Heart right ventricle (tissue), 16 donors: ENCODE measurements at regions of chr2 and their contacts with region 1.

Region 1: GRCh38 chr2:216698895-216699294 is 3.5 kb upstream of the IGFBP5 start:
- DNase-seq: peak in 1 of 2 donors; percentile 47
- ATAC-seq: peak in 7 of 8 donors; percentile 30 to 63 (median 48)
- H3K4me3 ChIP-seq: no peak overlapping the region
- H3K27ac ChIP-seq: peak overlapping the region in 6 of 10 donors; percentile 15 to 67 (median 38)
- H3K4me1 ChIP-seq: peaks cover 10 to 80% (median 48%) of the 10 kb centered on the region in 9 donors
- H3K27me3 ChIP-seq: peaks cover 0 to 71% (median 0%) of the 10 kb centered on the region in 7 donors
- CTCF ChIP-seq: peak; percentile 43 to 83 (median 67)

Region 2: GRCh38 chr2:216842636-216843035 is 143.7 kb after region 1 on chr2:
- intact Hi-C with region 1: loop called in 1 of 10 experiments (anchors 5 kb)
- DNase-seq: peak; percentile 53
- ATAC-seq: peak; percentile 30 to 79 (median 66)
- H3K4me3 ChIP-seq: no peak overlapping the region
- H3K27ac ChIP-seq: peak overlapping the region in 1 of 10 donors; percentile 11
- H3K4me1 ChIP-seq: peaks cover 0 to 42% (median 14%) of the 10 kb centered on the region in 9 donors
- H3K27me3 ChIP-seq: no peaks in the 10 kb centered on the region
- CTCF ChIP-seq: no peak

Region 3: GRCh38 chr2:216989340-216990129 is 290.6 kb after region 1 on chr2:
- intact Hi-C with region 1: loop called in 7 of 10 experiments (anchors 5 to 10 kb)
- DNase-seq: no peak
- ATAC-seq: peak in 3 of 8 donors; percentile 23 to 53 (median 26)
- H3K4me3 ChIP-seq: no peak overlapping the region
- H3K27ac ChIP-seq: no peak overlapping the region
- H3K4me1 ChIP-seq: peaks cover 0 to 37% (median 8%) of the 10 kb centered on the region in 9 donors
- H3K27me3 ChIP-seq: no peaks in the 10 kb centered on the region
- CTCF ChIP-seq: peak in 4 of 9 donors; percentile 9 to 27 (median 25)

Region 4: GRCh38 chr2:217027414-217027813 is 328.5 kb after region 1 on chr2:
- intact Hi-C with region 1: no loop called
- DNase-seq: no peak
- ATAC-seq: no peak
- H3K4me3 ChIP-seq: no peak overlapping the region
- H3K27ac ChIP-seq: no peak overlapping the region
- H3K4me1 ChIP-seq: no peaks in the 10 kb centered on the region
- H3K27me3 ChIP-seq: no peaks in the 10 kb centered on the region
- CTCF ChIP-seq: no peak

Region 5: GRCh38 chr2:217064234-217065024 is 365.5 kb after region 1 on chr2:
- intact Hi-C with region 1: loop called in 4 of 10 experiments (anchors 5 to 10 kb)
- DNase-seq: peak in 1 of 2 donors; percentile 45
- ATAC-seq: peak; percentile 60 to 95 (median 83)
- H3K4me3 ChIP-seq: peak overlapping the region in 4 of 10 donors; percentile 18 to 25 (median 22)
- H3K27ac ChIP-seq: peak overlapping the region in 9 of 10 donors; percentile 10 to 74 (median 61)
- H3K4me1 ChIP-seq: peaks cover 0 to 20% (median 11%) of the 10 kb centered on the region in 9 donors
- H3K27me3 ChIP-seq: no peaks in the 10 kb centered on the region
- CTCF ChIP-seq: no peak

Region 6: GRCh38 chr2:217166241-217166850 is 467.5 kb after region 1 on chr2:
- intact Hi-C with region 1: loop called in 9 of 10 experiments (anchors 2 to 5 kb)
- DNase-seq: peak in 1 of 2 donors; percentile 41
- ATAC-seq: peak; percentile 43 to 83 (median 69)
- H3K4me3 ChIP-seq: no peak overlapping the region
- H3K27ac ChIP-seq: no peak overlapping the region
- H3K4me1 ChIP-seq: peaks cover 0 to 23% (median 5%) of the 10 kb centered on the region in 9 donors
- H3K27me3 ChIP-seq: peaks cover 0 to 74% (median 0%) of the 10 kb centered on the region in 7 donors
- CTCF ChIP-seq: peak; percentile 42 to 78 (median 64)

Region 7: DNA sequence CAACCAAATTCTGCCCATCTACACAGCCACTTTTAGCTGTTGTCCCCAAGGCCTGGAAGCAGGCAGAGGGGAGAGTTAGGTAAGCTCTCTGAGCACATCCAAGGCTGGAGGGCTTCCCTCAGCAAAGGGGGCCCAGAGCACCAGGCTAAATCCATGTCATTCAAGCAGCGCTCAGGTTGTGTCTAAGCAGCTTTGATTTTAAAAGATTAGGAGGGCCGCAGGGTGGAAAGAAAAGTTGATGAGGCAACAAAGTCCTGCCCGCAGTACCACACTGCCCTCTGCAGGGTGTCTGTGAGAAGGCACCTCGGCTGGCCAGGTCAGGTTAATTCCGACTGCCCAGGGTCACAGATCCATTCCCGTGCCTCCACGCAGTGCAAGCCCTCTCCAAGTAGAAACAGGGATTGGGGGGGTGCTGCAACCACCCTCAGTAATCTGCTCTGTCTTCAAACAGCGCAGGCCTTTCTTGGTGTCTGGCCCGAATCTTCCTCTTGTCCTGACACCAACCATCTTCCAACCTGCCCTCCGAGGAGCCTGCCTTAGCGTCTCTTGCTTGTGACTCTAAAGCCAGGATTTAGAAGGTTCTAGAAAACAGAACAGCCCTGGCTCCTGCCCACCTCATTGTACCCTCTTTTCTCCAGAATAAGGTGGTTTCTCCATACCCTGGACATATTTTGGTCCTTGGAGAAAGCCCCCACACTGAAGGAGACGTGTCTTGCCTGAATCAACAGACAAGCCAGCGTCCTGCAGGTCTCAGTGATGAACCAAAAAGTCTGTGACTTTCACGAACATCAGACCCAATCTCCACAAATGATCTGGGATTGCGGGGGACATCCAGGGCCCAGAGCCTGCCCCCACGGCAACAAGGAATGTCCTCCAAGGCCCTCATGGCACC is 1014.7 kb after region 1 on chr2:
- intact Hi-C with region 1: loop called in 5 of 10 experiments (anchors 5 to 10 kb)
- DNase-seq: peak; percentile 80 to 82
- ATAC-seq: peak; percentile 76 to 88 (median 84)
- H3K4me3 ChIP-seq: no peak overlapping the region
- H3K27ac ChIP-seq: peak overlapping the region in 9 of 10 donors; percentile 12 to 82 (median 56)
- H3K4me1 ChIP-seq: peaks cover 0 to 26% (median 20%) of the 10 kb centered on the region in 9 donors
- H3K27me3 ChIP-seq: no peaks in the 10 kb centered on the region
- CTCF ChIP-seq: peak; percentile 86 to 99 (median 98)